Activated naive CD4-positive, alpha-beta T cell treated with anti-CD3 and anti-CD28 coated beads for 36 hours (primary cell): ENCODE measurements at regions of chr2 and their contacts with region 1.

Region 1: DNA sequence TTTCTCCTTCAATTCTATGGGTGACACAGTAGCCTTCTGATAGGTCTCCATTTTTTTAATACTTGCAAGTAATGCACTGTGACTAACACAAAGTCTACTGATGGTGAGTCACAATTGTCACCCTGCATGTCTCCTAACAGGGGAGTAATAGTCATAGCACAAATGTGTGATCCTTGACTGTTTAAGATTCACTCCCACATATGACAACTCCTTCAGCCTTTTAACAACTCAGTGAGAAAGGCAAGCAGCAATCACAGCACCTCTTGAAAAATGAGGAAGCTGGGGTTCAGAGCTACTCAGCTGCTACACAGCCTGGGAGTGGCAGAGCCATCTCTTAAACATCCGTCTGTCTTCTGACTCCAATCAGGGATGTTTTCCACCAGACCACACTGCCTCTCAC is 63.8 kb downstream of the EHD3 start:
- DNase-seq: peak; percentile 27
- H3K4me3 Mint-ChIP-seq: no peak overlapping the region
- H3K27ac Mint-ChIP-seq: no peak overlapping the region
- H3K4me1 Mint-ChIP-seq: peaks cover 3% of the 10 kb centered on the region
- H3K27me3 Mint-ChIP-seq: no peaks in the 10 kb centered on the region

Region 2: GRCh38 chr2:31270136-31270535 is 27.6 kb before region 1 on chr2:
- CTCF ChIA-PET with region 1: no interaction called
- intact Hi-C with region 1: no loop called
- DNase-seq: no peak
- H3K4me3 Mint-ChIP-seq: no peak overlapping the region
- H3K27ac Mint-ChIP-seq: no peak overlapping the region
- H3K4me1 Mint-ChIP-seq: no peaks in the 10 kb centered on the region
- H3K27me3 Mint-ChIP-seq: peaks cover 6% of the 10 kb centered on the region

Region 3: GRCh38 chr2:31318361-31319336 is 20.9 kb after region 1 on chr2:
- CTCF ChIA-PET with region 1: interaction called, 3 read pairs
- intact Hi-C with region 1: loop called (anchors 1 kb)
- DNase-seq: peak; percentile 61
- H3K4me3 Mint-ChIP-seq: no peak overlapping the region
- H3K27ac Mint-ChIP-seq: no peak overlapping the region
- H3K4me1 Mint-ChIP-seq: peaks cover 39% of the 10 kb centered on the region
- H3K27me3 Mint-ChIP-seq: no peaks in the 10 kb centered on the region

Region 4: GRCh38 chr2:31434911-31435310 is 137.2 kb after region 1 on chr2:
- CTCF ChIA-PET with region 1: no interaction called
- intact Hi-C with region 1: no loop called
- DNase-seq: peak; percentile 12
- H3K4me3 Mint-ChIP-seq: no peak overlapping the region
- H3K27ac Mint-ChIP-seq: no peak overlapping the region
- H3K4me1 Mint-ChIP-seq: peaks cover 7% of the 10 kb centered on the region
- H3K27me3 Mint-ChIP-seq: peaks cover 4% of the 10 kb centered on the region

Region 5: DNA sequence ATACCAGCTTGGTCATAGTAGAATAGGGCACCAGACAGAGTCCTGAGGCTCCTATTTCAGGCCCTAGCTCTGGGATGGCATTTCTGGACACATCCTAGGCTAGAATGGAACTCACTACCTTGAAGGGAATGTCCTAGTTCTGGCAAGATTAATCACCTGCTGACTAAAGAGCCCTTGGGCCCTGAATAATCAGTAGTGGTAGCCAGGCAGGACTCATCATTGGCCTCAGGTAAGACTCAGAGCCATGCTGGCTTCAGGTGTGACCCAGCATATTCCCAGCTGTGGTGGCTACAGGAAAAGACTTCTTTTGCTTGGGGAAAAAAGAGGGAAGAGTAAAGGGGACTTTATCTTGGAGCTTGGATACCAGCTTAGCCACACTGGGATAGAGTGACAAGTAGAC is 414.0 kb after region 1 on chr2:
- CTCF ChIA-PET with region 1: no interaction called
- intact Hi-C with region 1: no loop called
- DNase-seq: no peak
- H3K4me3 Mint-ChIP-seq: no peak overlapping the region
- H3K27ac Mint-ChIP-seq: no peak overlapping the region
- H3K4me1 Mint-ChIP-seq: no peaks in the 10 kb centered on the region
- H3K27me3 Mint-ChIP-seq: no peaks in the 10 kb centered on the region